ENCODE measurements at regions of chr3 and their contacts with region 1.

Region 1: DNA sequence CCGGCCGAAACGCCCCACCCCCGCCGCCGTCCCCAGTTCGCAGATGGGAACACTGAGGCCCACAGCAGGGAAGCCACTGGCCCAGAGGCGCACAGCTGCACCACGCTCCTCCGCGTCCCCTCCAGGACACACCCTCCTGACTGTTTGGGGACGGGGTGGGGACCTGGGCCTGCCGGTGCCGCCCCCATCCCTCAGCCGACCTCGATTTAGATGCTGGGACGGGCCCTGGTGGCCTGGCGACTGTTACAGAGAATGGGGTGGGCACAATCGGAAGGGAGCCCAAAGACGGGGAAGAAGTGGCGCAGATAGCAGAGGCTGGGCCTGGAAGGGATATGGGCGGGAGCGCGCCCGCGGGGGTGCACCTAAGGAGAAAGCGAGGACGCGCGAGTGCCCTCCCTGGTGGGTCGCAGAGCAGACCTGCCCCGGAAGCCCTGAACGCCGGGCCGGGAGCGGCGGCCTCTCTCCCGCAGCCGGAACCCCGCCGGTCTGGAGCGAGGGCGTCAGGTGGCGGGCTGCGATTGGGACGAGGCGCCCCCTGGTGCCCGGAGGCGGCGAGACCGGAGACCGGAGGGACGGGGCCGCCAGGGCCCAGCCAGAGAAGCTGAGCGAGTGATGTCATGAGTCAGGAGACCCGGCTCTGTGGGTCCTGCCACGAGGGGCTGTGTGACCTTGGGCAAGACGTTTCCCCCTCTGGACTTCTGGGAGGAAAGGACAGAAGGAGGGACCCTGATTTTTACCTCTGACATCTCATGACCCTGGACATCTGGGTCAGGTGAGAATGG is 78.4 kb downstream of the IQSEC1 start:
- DNase-seq: peak; percentile 81
- ATAC-seq: peak; percentile 70
- H3K4me3 Mint-ChIP-seq: peak overlapping the region; percentile 89
- H3K27ac Mint-ChIP-seq: peak overlapping the region; percentile 88
- H3K4me1 Mint-ChIP-seq: peaks cover 85% of the 10 kb centered on the region
- H3K27me3 Mint-ChIP-seq: no peaks in the 10 kb centered on the region
- CTCF ChIP-seq: peak; percentile 93

Region 2: DNA sequence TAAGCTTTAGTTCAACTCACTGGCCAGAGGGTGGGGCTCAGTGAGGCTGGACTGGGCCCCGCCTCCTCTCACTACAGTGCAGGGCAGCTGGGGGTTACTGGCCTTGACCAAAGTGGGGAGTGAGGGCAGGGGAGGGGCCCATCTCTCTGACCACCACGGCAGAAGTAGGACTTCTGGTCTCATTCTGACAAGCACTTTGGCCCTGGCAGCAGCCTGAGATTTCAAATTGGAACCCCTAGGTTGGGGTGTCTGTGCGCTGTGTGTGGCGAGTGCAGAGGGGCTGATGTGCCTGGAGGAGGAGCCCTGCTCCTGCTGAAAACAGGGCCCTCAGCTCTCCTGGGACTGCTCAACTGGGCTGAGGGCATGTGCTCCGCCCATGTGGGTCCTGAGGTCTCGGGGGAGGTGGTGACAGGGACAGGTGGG is 93.2 kb before region 1 on chr3:
- CTCF ChIA-PET with region 1: interaction called, 3 read pairs
- POLR2A ChIA-PET with region 1: interaction called, 4 read pairs
- intact Hi-C with region 1: loop called (anchors 5 kb)
- DNase-seq: no peak
- ATAC-seq: peak; percentile 75
- H3K4me3 Mint-ChIP-seq: no peak overlapping the region
- H3K27ac Mint-ChIP-seq: peak overlapping the region; percentile 72
- H3K4me1 Mint-ChIP-seq: peaks cover 39% of the 10 kb centered on the region
- H3K27me3 Mint-ChIP-seq: no peaks in the 10 kb centered on the region
- CTCF ChIP-seq: no peak

Region 3: GRCh38 chr3:12932347-12932746 is 62.5 kb before region 1 on chr3:
- CTCF ChIA-PET with region 1: interaction called, 3 read pairs
- POLR2A ChIA-PET with region 1: interaction called, 11 read pairs
- intact Hi-C with region 1: no loop called
- DNase-seq: no peak
- ATAC-seq: no peak
- H3K4me3 Mint-ChIP-seq: no peak overlapping the region
- H3K27ac Mint-ChIP-seq: no peak overlapping the region
- H3K4me1 Mint-ChIP-seq: peaks cover 20% of the 10 kb centered on the region
- H3K27me3 Mint-ChIP-seq: no peaks in the 10 kb centered on the region
- CTCF ChIP-seq: no peak

Region 4: GRCh38 chr3:12954891-12955650 is 39.7 kb before region 1 on chr3:
- CTCF ChIA-PET with region 1: interaction called, 6 read pairs
- POLR2A ChIA-PET with region 1: interaction called, 6 read pairs
- intact Hi-C with region 1: loop called (anchors 2 kb)
- DNase-seq: peak; percentile 67
- ATAC-seq: peak; percentile 95
- H3K4me3 Mint-ChIP-seq: peak overlapping the region; percentile 63
- H3K27ac Mint-ChIP-seq: peak overlapping the region; percentile 82
- H3K4me1 Mint-ChIP-seq: peaks cover 86% of the 10 kb centered on the region
- H3K27me3 Mint-ChIP-seq: no peaks in the 10 kb centered on the region
- CTCF ChIP-seq: no peak

Region 5: GRCh38 chr3:13012228-13012691 is 17.5 kb after region 1 on chr3:
- CTCF ChIA-PET with region 1: interaction called, 18 read pairs
- POLR2A ChIA-PET with region 1: interaction called, 465 read pairs
- intact Hi-C with region 1: loop called (anchors 1 kb)
- DNase-seq: no peak
- ATAC-seq: peak; percentile 36
- H3K4me3 Mint-ChIP-seq: peak overlapping the region; percentile 87
- H3K27ac Mint-ChIP-seq: peak overlapping the region; percentile 95
- H3K4me1 Mint-ChIP-seq: peaks cover 98% of the 10 kb centered on the region
- H3K27me3 Mint-ChIP-seq: no peaks in the 10 kb centered on the region
- CTCF ChIP-seq: no peak

Region 6: GRCh38 chr3:13073326-13074005 is 78.7 kb after region 1 on chr3 and contains the start of gene IQSEC1:
- CTCF ChIA-PET with region 1: interaction called, 4 read pairs
- POLR2A ChIA-PET with region 1: interaction called, 3 read pairs
- intact Hi-C with region 1: loop called (anchors 2 kb)
- DNase-seq: peak; percentile 76
- ATAC-seq: peak; percentile 66
- H3K4me3 Mint-ChIP-seq: peak within 1 kb of the TSS; percentile 86
- H3K27ac Mint-ChIP-seq: peak within 1 kb of the TSS; percentile 85
- H3K4me1 Mint-ChIP-seq: peaks cover 62% of the 10 kb centered on the region
- H3K27me3 Mint-ChIP-seq: no peaks in the 10 kb centered on the region
- CTCF ChIP-seq: no peak
- total RNA-seq, gene IQSEC1: 260 and 296 TPM in 2 replicates

Measured in activated B cell treated with CpG ODN at 0.5 μM for 24 hours (primary cell).